AG04449 (cell line): ENCODE measurements at regions of chr1 and their contacts with region 1.

Region 1: DNA sequence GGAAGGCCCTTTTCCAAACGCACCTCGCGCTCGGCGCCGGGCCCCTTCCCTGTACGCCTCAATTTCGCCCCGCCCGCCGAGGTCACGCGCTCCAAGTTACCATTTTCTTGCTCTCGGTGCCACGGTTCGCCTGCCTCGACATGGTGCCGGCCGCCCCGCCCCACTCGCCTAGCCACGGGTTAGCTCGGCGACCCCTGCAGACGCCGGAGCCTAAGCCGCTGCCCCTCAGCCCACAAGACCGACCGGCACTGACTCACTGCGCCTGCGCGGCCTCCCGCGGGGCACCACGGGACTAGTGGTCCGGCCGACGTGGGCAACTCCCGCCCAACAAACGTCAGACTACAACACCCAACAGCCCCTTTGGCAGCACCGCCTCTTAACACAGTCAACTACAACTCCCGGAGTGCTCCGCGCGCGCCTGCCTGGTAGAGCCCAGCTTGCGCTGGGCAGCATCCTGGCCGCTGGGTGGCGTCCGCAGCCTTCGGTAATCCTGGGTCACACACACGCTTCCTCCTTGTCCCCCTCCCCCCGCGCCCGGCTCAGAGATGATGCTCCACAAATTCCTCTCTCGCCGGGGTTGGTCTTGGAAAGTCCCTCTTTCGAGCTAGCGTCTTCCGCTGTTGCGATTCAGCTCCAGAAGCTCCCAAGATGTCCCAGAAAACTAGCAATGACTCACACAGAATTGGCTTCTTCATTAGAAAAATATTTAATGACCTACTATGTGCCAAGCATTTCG is at the start of gene TRAPPC3:
- DNase-seq: peak; percentile 99
- H3K4me3 ChIP-seq: peak within 1 kb of the TSS; percentile 86
- CTCF ChIP-seq: peak; percentile 94

Region 2: DNA sequence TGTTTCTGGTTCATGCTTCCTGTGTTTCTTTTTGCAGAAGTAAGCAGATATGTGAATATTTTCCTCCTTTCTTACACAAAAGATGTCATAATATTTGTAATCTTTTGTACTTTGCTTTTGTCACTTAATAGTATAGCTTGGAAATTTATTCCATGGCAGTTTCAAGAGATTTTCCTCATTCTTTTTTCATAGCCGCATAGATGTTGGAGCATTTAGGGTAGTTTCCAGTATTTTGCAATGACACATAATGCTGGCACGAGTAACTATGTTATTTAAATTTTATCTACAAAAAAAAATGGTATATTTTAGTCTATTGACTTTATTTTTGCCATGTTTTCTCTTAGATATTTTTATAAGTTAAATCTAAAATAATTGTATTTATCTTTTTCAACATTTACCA is 177.8 kb before region 1 on chr1:
- CTCF ChIA-PET with region 1: no interaction called
- POLR2A ChIA-PET with region 1: no interaction called
- DNase-seq: no peak
- H3K4me3 ChIP-seq: no peak overlapping the region
- CTCF ChIP-seq: no peak

Region 3: GRCh38 chr1:36109041-36109679 is 40.2 kb before region 1 on chr1:
- CTCF ChIA-PET with region 1: interaction called, 16 read pairs
- POLR2A ChIA-PET with region 1: interaction called, 5 read pairs
- DNase-seq: no peak
- H3K4me3 ChIP-seq: no peak overlapping the region
- CTCF ChIP-seq: no peak

Region 4: DNA sequence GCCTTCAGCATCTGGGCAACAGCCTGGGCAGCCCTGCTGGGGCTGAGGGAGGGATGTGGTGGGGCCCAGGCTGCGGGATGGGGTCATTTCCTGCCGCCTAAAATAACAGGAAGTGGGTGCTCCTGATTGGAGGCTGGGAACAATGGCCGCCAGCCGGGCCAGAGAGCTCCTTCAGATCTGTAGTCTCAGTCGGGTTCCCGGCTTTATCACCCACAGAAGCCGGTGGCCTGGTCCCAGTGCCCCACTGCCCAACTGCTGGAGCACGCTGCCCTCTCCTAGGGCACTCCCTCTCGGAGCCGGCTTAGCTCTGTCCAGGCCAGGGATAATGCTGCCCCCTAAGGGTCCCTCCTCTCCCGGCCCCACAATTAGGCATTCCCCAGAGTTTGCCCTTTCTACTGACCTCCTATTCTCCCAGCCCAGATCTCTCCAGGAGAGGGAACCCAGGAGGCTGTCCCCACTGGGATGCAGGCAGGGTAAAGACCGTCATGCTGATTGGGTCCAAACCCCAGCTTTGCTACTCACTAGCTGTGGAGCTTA is 11.6 kb after region 1 on chr1:
- CTCF ChIA-PET with region 1: interaction called, 39 read pairs
- POLR2A ChIA-PET with region 1: interaction called, 11 read pairs
- DNase-seq: no peak
- H3K4me3 ChIP-seq: peak overlapping the region; percentile 56
- CTCF ChIP-seq: peak; percentile 33

Region 5: GRCh38 chr1:36217670-36218069 is 68.3 kb after region 1 on chr1:
- CTCF ChIA-PET with region 1: interaction called, 24 read pairs
- POLR2A ChIA-PET with region 1: no interaction called
- DNase-seq: no peak
- H3K4me3 ChIP-seq: no peak overlapping the region
- CTCF ChIP-seq: peak; percentile 26

Region 6: GRCh38 chr1:36279110-36279788 is 129.8 kb after region 1 on chr1:
- CTCF ChIA-PET with region 1: interaction called, 19 read pairs
- POLR2A ChIA-PET with region 1: interaction called, 5 read pairs
- DNase-seq: no peak
- H3K4me3 ChIP-seq: no peak overlapping the region
- CTCF ChIP-seq: no peak

Region 7: GRCh38 chr1:36300526-36300925 is 151.1 kb after region 1 on chr1:
- CTCF ChIA-PET with region 1: interaction called, 12 read pairs
- POLR2A ChIA-PET with region 1: interaction called, 5 read pairs
- DNase-seq: no peak
- H3K4me3 ChIP-seq: no peak overlapping the region
- CTCF ChIP-seq: no peak

Region 8: GRCh38 chr1:36369061-36369861 is 219.9 kb after region 1 on chr1:
- CTCF ChIA-PET with region 1: interaction called, 14 read pairs
- POLR2A ChIA-PET with region 1: no interaction called
- DNase-seq: no peak
- H3K4me3 ChIP-seq: no peak overlapping the region
- CTCF ChIP-seq: peak; percentile 92

Region 9: DNA sequence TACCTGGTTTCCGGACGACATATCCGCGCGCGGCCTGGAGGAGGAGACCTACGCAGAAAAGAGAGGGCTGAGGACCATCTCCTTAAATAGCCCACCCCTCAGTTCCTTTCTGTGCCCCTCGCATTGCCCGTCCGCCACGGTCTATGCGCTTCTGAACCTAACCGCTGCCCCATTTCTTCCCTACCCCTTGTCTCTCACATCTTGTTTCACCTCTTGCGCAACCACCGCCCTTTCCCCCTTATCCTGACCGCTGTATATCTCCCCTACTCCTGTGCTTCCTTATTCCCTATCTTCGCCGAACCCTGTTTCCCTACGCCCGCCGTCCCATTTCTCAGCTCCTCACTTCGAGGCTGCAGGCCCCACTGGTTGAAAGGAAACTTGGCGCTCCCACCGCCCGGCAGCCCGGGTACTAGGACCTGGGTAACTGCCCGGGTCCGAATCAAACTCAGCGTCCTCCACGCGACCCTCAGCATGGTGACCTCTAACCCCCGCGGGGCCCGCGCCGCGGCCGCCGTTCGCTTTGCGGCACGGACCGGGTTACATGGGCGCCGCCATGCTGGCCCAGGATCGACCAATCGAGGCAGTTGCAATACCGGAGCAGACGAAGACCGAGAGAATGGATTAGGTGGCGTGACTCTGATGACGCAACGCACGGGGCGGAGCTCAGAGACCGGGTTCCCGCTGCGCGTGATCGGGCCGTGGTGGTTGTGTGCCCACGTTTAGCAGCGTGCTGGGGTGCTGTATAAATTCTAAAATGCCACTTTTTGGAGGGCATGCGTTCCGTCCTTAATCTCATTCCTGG is 314.6 kb after region 1 on chr1 and contains the start of gene MRPS15:
- CTCF ChIA-PET with region 1: no interaction called
- POLR2A ChIA-PET with region 1: no interaction called
- DNase-seq: peak; percentile 68
- H3K4me3 ChIP-seq: peak within 1 kb of the TSS; percentile 85
- CTCF ChIP-seq: no peak

Region 10: DNA sequence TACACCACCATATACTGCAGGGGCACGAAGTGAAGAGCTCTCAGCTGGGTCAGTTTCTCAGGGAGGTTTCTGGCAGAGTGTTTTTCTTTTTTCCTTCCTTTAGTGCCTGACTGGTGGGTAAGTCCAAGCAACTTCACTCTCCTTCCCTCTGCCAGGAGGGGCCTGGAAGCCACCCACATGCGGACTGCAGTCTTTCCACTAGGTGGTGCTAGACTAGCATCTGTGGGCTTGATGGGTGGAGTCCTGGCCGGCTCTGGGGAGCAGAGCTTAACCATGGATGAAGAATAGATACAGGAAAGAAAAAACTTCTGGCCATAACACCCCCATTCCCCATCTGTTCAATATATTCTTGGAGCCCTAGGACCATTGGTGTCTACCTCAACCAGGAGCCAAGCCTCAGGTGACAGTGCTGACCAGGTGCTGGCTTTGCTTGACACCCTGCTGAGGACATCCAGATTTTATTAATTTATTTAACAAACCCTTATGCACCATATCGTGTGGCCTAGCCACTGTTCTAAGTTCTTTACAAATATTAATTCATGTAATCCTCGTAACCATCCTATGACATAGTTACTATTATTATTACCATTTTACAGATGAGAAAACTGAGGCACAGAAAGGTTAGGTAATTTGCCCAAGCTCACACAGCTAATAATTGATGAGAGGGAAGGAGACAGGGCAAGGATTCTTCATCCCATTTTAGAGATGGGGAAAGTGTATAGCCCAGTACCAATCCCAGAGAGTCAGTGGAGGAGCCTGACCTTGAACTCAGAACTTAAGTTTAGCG is 460.0 kb after region 1 on chr1:
- CTCF ChIA-PET with region 1: no interaction called
- POLR2A ChIA-PET with region 1: no interaction called
- DNase-seq: no peak
- H3K4me3 ChIP-seq: no peak overlapping the region
- CTCF ChIP-seq: peak; percentile 48